ENCODE measurements at regions of chr9 and their contacts with region 1.

Region 1: DNA sequence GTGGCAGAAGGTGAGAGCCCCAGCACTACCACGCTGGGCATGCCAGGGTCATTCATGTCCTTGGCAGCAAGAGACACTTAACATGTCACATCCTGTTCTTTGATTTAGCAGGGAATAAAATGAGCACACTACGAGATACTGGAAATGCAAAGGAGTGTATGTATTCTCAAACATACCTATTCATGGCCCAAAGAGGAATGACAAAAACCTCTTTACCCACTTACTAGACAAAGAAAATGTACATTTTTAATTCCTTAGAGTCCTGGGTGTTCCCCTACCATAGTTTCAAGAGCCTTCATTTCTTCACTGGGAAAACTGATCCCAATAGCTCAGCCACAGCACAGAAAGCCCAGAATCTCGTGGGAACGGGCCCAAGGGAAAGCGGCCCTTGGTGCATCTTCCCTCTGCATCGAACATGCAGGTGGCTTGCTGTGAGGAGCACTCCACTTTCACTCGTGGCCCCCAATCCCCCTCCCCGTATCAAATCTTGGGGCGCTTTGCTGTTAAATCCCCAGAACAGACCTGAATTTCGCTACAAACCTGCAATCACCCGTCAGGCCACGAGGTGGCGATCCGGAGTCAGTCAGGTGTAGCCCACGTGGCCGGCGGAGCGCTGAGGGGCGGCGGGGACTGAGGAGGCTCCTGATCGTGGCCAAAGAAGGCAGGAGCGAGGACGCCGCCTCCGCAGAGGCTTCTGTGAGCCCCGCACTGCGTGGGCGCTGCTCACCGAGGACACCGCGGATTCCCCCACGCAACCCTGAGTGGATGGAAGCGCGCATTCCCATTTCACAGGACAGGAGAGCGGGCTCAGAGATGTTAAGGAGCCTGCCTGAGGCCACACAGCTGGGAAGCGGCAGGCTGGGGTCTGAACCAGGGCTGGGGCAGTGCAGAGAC is 91.4 kb downstream of the LMX1B start:
- DNase-seq: peak; percentile 90
- ATAC-seq: peak; percentile 86
- H3K4me3 ChIP-seq: peak overlapping the region in 4 of 5 experiments; percentile 17 to 26 (median 20)
- H3K4me3 Mint-ChIP-seq: peak overlapping the region; percentile 78
- H3K27ac ChIP-seq: no peak overlapping the region
- H3K27ac Mint-ChIP-seq: peak overlapping the region; percentile 65
- H3K4me1 ChIP-seq: peaks cover 13 to 16% of the 10 kb centered on the region in 2 donors
- H3K4me1 Mint-ChIP-seq: peaks cover 15% of the 10 kb centered on the region
- H3K27me3 ChIP-seq: peaks cover 0 to 29% (median 19%) of the 10 kb centered on the region in 4 experiments
- H3K27me3 Mint-ChIP-seq: peaks cover 37% of the 10 kb centered on the region
- CTCF ChIP-seq: peak; percentile 89

Region 2: GRCh38 chr9:126690431-126691350 is 14.4 kb before region 1 on chr9:
- CTCF ChIA-PET with region 1: interaction called, 12 read pairs
- POLR2A ChIA-PET with region 1: no interaction called
- intact Hi-C with region 1: no loop called
- DNase-seq: peak; percentile 61
- ATAC-seq: peak; percentile 60
- H3K4me3 ChIP-seq: no peak overlapping the region
- H3K4me3 Mint-ChIP-seq: no peak overlapping the region
- H3K27ac ChIP-seq: no peak overlapping the region
- H3K27ac Mint-ChIP-seq: no peak overlapping the region
- H3K4me1 ChIP-seq: no peaks in the 10 kb centered on the region
- H3K4me1 Mint-ChIP-seq: no peaks in the 10 kb centered on the region
- H3K27me3 ChIP-seq: peaks cover 0 to 44% (median 2%) of the 10 kb centered on the region in 4 experiments
- H3K27me3 Mint-ChIP-seq: peaks cover 29% of the 10 kb centered on the region
- CTCF ChIP-seq: peak; percentile 73

Region 3: DNA sequence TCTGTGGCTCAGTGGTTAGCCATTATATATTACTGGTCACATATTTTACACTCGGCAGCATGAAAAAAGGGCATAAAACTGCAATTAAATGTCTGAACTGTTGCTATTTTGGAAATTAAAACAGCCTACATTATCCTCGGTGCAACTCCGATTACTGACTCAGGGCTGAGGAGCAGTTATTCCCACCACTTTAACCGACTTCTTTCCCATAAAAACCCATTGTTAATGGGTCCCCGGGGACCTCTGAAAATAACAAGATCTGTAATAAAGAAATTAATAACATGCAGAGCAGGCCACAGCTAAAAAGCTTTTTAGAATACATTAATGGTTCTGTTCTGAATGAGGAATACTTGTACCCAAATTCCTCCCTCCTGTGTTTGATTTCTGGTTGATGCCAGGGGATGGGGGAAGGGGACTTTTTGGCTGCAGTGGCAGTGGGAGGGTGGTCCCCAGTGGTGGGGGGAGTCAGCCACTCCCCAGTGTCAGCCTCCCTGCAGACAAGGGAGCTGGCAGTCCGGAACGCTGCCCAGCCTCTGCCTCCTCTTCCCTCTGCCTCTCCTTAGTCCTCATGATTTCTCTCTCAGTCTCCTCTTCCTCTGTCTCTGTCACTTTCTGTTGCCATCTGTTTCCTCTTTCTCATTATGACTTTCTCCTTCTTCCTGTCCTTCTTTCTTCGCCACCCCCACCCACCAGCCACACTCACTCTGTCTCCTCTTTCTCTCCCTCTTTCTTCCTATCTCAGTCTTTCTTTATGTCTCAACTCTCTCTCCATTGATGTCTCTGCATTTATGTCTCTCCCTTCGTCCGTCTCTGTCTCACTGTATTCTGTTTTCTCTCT is 40.7 kb after region 1 on chr9:
- CTCF ChIA-PET with region 1: interaction called, 50 read pairs
- POLR2A ChIA-PET with region 1: no interaction called
- intact Hi-C with region 1: no loop called
- DNase-seq: peak; percentile 17
- ATAC-seq: peak; percentile 43
- H3K4me3 ChIP-seq: no peak overlapping the region
- H3K4me3 Mint-ChIP-seq: peak overlapping the region; percentile 28
- H3K27ac ChIP-seq: no peak overlapping the region
- H3K27ac Mint-ChIP-seq: peak overlapping the region; percentile 26
- H3K4me1 ChIP-seq: peaks cover 26 to 28% of the 10 kb centered on the region in 2 donors
- H3K4me1 Mint-ChIP-seq: peaks cover 33% of the 10 kb centered on the region
- H3K27me3 ChIP-seq: no peaks in the 10 kb centered on the region
- H3K27me3 Mint-ChIP-seq: no peaks in the 10 kb centered on the region
- CTCF ChIP-seq: no peak

Region 4: GRCh38 chr9:126781186-126782052 is 76.3 kb after region 1 on chr9:
- CTCF ChIA-PET with region 1: interaction called, 680 read pairs
- POLR2A ChIA-PET with region 1: interaction called, 8 read pairs
- intact Hi-C with region 1: loop called (anchors 1 kb)
- DNase-seq: peak; percentile 83
- ATAC-seq: peak; percentile 86
- H3K4me3 ChIP-seq: no peak overlapping the region
- H3K4me3 Mint-ChIP-seq: no peak overlapping the region
- H3K27ac ChIP-seq: no peak overlapping the region
- H3K27ac Mint-ChIP-seq: no peak overlapping the region
- H3K4me1 ChIP-seq: peaks cover 0 to 3% of the 10 kb centered on the region in 2 donors
- H3K4me1 Mint-ChIP-seq: no peaks in the 10 kb centered on the region
- H3K27me3 ChIP-seq: peaks cover 0 to 8% (median 4%) of the 10 kb centered on the region in 4 experiments
- H3K27me3 Mint-ChIP-seq: peaks cover 24% of the 10 kb centered on the region
- CTCF ChIP-seq: peak; percentile 98

Region 5: GRCh38 chr9:126804696-126805545 is 99.8 kb after region 1 on chr9 and contains the start of gene ZBTB43:
- CTCF ChIA-PET with region 1: interaction called, 21 read pairs
- POLR2A ChIA-PET with region 1: no interaction called
- intact Hi-C with region 1: no loop called
- DNase-seq: peak; percentile 97
- ATAC-seq: peak; percentile 85
- H3K4me3 ChIP-seq: peak within 1 kb of the TSS; percentile 83 to 94 (median 88)
- H3K4me3 Mint-ChIP-seq: peak within 1 kb of the TSS; percentile 87
- H3K27ac ChIP-seq: peak within 1 kb of the TSS; percentile 75 to 89
- H3K27ac Mint-ChIP-seq: peak within 1 kb of the TSS; percentile 97
- H3K4me1 ChIP-seq: peaks cover 17 to 20% of the 10 kb centered on the region in 2 donors
- H3K4me1 Mint-ChIP-seq: peaks cover 31% of the 10 kb centered on the region
- H3K27me3 ChIP-seq: no peaks in the 10 kb centered on the region
- H3K27me3 Mint-ChIP-seq: no peaks in the 10 kb centered on the region
- CTCF ChIP-seq: no peak
- total RNA-seq, gene ZBTB43: 19.5 and 20.2 TPM in 2 replicates